ENCODE measurements at regions of chr14 and their contacts with region 1.

Region 1: GRCh38 chr14:61252369-61253063 is 28.6 kb downstream of the TMEM30B start:
- DNase-seq: peak; percentile 28 to 80 (median 46)
- ATAC-seq: peak; percentile 92
- H3K4me3 ChIP-seq: no peak overlapping the region
- H3K4me3 Mint-ChIP-seq: no peak overlapping the region
- H3K27ac ChIP-seq: no peak overlapping the region
- H3K27ac Mint-ChIP-seq: no peak overlapping the region
- H3K4me1 ChIP-seq: peaks cover 2% of the 10 kb centered on the region
- H3K4me1 Mint-ChIP-seq: no peaks in the 10 kb centered on the region
- H3K27me3 ChIP-seq: peaks cover 0 to 13% of the 10 kb centered on the region in 2 experiments
- H3K27me3 Mint-ChIP-seq: peaks cover 45% of the 10 kb centered on the region
- CTCF ChIP-seq: peak; percentile 72

Region 2: DNA sequence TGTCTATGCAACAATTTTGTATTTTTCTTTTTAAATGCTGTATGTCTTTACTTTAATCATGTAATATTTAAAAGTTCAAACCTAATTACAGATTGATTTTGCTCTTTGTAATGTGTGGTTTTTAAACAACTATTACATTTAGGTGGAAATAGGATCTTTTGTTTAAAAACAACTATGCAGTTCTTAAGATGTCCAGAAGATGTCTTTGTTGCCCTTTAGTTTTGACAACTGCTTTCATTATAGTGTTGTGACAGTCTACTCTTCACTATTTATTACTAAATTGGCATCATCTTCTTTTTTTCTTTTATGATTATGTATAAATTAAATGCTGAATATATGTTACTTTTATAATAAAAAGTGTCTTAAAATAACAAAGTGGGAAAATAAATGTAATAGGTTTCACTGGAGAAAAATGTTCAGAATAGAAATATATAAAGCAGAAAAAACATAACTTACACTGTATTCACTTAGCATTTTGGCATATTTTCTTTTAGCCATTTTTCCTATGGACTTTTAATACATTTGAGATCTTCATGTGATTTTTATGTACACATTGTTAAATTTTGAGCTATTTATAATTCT is 1187.9 kb before region 1 on chr14:
- CTCF ChIA-PET with region 1: no interaction called
- POLR2A ChIA-PET with region 1: no interaction called
- intact Hi-C with region 1: loop called in 1 of 2 experiments (anchors 10 kb)
- DNase-seq: peak in 3 of 14 experiments; percentile 60 to 65 (median 60)
- ATAC-seq: peak; percentile 41
- H3K4me3 ChIP-seq: no peak overlapping the region
- H3K4me3 Mint-ChIP-seq: no peak overlapping the region
- H3K27ac ChIP-seq: no peak overlapping the region
- H3K27ac Mint-ChIP-seq: no peak overlapping the region
- H3K4me1 ChIP-seq: no peaks in the 10 kb centered on the region
- H3K4me1 Mint-ChIP-seq: no peaks in the 10 kb centered on the region
- H3K27me3 ChIP-seq: peaks cover 0 to 3% of the 10 kb centered on the region in 2 experiments
- H3K27me3 Mint-ChIP-seq: peaks cover 18% of the 10 kb centered on the region
- CTCF ChIP-seq: peak; percentile 65

Region 3: GRCh38 chr14:60195179-60195810 is 1057.2 kb before region 1 on chr14:
- CTCF ChIA-PET with region 1: no interaction called
- POLR2A ChIA-PET with region 1: no interaction called
- intact Hi-C with region 1: loop called in 1 of 2 experiments (anchors 10 kb)
- DNase-seq: peak in 3 of 14 experiments; percentile 7 to 31 (median 30)
- ATAC-seq: peak; percentile 68
- H3K4me3 ChIP-seq: no peak overlapping the region
- H3K4me3 Mint-ChIP-seq: no peak overlapping the region
- H3K27ac ChIP-seq: no peak overlapping the region
- H3K27ac Mint-ChIP-seq: no peak overlapping the region
- H3K4me1 ChIP-seq: no peaks in the 10 kb centered on the region
- H3K4me1 Mint-ChIP-seq: no peaks in the 10 kb centered on the region
- H3K27me3 ChIP-seq: no peaks in the 10 kb centered on the region
- H3K27me3 Mint-ChIP-seq: peaks cover 11% of the 10 kb centered on the region
- CTCF ChIP-seq: no peak

Region 4: DNA sequence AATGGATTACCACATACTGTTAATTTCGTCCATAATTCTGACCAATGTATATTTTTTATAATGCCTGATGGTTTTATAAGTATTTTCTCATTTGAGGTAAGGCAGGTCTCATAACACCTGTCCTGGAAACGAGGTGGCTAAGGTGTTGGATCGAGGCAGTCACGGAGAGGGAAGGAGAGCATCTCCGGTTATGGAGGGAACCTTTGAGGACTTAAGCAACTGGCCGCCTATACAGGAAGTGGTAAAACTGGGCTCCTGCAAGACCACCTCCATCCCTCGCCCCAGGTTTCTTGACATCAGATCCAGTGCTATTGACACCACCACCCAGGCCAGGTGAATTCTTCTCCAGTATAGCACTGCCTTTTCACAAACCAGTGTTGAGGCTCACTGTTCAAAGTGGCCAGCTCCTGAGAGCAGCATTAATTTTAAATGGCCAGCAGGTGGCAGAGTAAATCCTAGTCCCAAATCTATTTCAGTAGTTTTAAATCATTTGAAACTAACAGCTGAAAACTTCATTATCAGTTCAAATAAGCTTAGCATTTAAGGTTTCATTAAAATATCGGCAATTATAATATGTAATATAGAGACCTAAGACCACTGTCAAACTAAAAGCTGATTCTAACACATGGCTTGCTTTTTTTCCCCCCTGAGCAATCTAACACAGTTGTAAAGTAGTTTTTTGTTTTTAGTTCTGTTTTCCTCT is 902.7 kb before region 1 on chr14:
- CTCF ChIA-PET with region 1: interaction called, 4 read pairs
- POLR2A ChIA-PET with region 1: no interaction called
- intact Hi-C with region 1: loop called (anchors 1 kb)
- DNase-seq: peak in 6 of 14 experiments; percentile 4 to 63 (median 33)
- ATAC-seq: peak; percentile 34
- H3K4me3 ChIP-seq: no peak overlapping the region
- H3K4me3 Mint-ChIP-seq: no peak overlapping the region
- H3K27ac ChIP-seq: no peak overlapping the region
- H3K27ac Mint-ChIP-seq: no peak overlapping the region
- H3K4me1 ChIP-seq: no peaks in the 10 kb centered on the region
- H3K4me1 Mint-ChIP-seq: peaks cover 12% of the 10 kb centered on the region
- H3K27me3 ChIP-seq: no peaks in the 10 kb centered on the region
- H3K27me3 Mint-ChIP-seq: peaks cover 19% of the 10 kb centered on the region
- CTCF ChIP-seq: peak; percentile 75

Region 5: GRCh38 chr14:60622917-60623257 is 629.6 kb before region 1 on chr14:
- CTCF ChIA-PET with region 1: interaction called, 3 read pairs
- POLR2A ChIA-PET with region 1: no interaction called
- intact Hi-C with region 1: loop called (anchors 1 kb)
- DNase-seq: no peak
- ATAC-seq: no peak
- H3K4me3 ChIP-seq: no peak overlapping the region
- H3K4me3 Mint-ChIP-seq: no peak overlapping the region
- H3K27ac ChIP-seq: no peak overlapping the region
- H3K27ac Mint-ChIP-seq: no peak overlapping the region
- H3K4me1 ChIP-seq: no peaks in the 10 kb centered on the region
- H3K4me1 Mint-ChIP-seq: no peaks in the 10 kb centered on the region
- H3K27me3 ChIP-seq: peaks cover 0 to 13% of the 10 kb centered on the region in 2 experiments
- H3K27me3 Mint-ChIP-seq: peaks cover 42% of the 10 kb centered on the region
- CTCF ChIP-seq: no peak

Region 6: DNA sequence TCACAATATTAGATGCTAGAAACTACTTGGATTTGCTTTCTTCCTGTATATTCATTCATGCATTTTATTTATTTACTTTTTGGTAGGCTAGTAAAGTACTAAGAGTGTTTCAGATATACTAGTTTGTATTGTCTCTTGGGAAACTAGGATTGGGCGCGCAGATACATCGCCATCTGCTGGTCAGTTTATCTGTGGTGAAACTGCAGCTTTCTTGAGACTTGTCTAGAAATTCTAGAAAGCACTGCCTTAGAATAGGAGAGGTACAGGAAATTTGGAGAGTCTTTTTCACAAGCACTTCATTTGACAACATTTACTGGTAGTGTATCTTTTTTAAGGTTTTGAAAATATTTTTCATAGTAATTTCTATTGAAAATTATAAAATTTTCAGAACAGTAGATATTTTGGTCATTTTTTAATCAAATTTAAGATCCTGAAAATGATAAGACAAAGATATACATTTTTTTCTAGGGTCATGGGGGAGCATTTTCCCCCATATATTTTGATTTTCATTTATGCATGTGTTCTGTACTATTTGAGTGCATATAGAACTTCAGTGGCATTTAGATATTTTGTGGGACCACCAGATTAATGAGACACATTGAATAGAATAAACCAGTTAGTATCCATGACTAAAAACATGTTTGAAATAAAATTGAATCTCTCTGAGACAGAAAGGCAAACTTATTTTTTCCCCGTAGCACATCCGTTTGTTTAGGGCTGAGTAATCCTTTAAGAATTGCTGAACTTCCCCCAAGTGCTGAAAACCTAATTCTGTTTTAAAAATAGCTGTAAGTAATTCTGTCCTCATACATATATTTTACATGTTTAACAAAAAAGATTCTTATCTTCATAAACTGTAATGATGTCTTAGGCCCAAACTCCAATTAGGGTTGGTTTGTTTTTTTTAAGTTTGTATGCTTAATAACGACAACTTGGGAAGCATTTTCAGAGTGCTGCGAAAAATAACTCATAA is 227.0 kb before region 1 on chr14:
- CTCF ChIA-PET with region 1: no interaction called
- POLR2A ChIA-PET with region 1: no interaction called
- intact Hi-C with region 1: loop called (anchors 5 kb)
- DNase-seq: peak in 13 of 14 experiments; percentile 13 to 74 (median 25)
- ATAC-seq: peak; percentile 41
- H3K4me3 ChIP-seq: no peak overlapping the region
- H3K4me3 Mint-ChIP-seq: no peak overlapping the region
- H3K27ac ChIP-seq: no peak overlapping the region
- H3K27ac Mint-ChIP-seq: no peak overlapping the region
- H3K4me1 ChIP-seq: no peaks in the 10 kb centered on the region
- H3K4me1 Mint-ChIP-seq: no peaks in the 10 kb centered on the region
- H3K27me3 ChIP-seq: no peaks in the 10 kb centered on the region
- H3K27me3 Mint-ChIP-seq: no peaks in the 10 kb centered on the region
- CTCF ChIP-seq: peak; percentile 98

Region 7: GRCh38 chr14:61355892-61356325 is 103.4 kb after region 1 on chr14:
- CTCF ChIA-PET with region 1: no interaction called
- POLR2A ChIA-PET with region 1: no interaction called
- intact Hi-C with region 1: no loop called
- DNase-seq: peak in 8 of 14 experiments; percentile 39 to 67 (median 52)
- ATAC-seq: peak; percentile 80
- H3K4me3 ChIP-seq: no peak overlapping the region
- H3K4me3 Mint-ChIP-seq: peak overlapping the region; percentile 81
- H3K27ac ChIP-seq: peak overlapping the region in 1 of 2 donors; percentile 7
- H3K27ac Mint-ChIP-seq: peak overlapping the region; percentile 99
- H3K4me1 ChIP-seq: peaks cover 71% of the 10 kb centered on the region
- H3K4me1 Mint-ChIP-seq: peaks cover 98% of the 10 kb centered on the region
- H3K27me3 ChIP-seq: no peaks in the 10 kb centered on the region
- H3K27me3 Mint-ChIP-seq: no peaks in the 10 kb centered on the region
- CTCF ChIP-seq: no peak

Measured in CD4-positive, alpha-beta T cell (primary cell).